Aorta (tissue), 5 donors: ENCODE measurements at regions of chr4 and their contacts with region 1.

Region 1: DNA sequence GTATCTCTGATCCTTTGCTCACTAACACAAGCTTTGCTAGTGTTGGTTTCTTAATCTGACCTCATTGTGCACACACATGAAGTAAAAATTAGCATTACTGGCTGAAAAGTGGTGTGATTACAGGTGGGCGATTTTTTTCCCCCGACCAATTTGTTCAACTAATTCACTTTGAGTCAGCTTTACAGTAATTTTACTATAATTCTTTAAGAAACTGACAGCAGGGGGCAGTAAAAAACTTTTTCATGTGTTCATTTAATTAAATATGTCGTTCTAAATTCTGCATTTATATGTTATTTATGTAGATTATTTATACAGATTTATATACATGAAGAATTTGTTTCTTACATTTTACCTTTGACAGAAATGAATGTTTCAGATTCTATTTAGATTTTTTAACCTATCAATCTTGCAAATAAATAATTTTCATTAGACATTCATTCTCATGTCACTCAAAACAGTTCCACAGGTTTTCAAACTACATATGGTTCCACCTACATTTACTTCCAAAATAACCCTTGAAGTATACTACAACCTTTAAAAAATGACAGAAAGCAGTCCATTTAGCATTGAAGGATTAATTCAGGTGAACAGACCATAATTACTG is 17.5 kb downstream of the PALLD start:
- DNase-seq: no peak
- ATAC-seq: no peak
- H3K4me3 ChIP-seq: no peak overlapping the region
- H3K27ac ChIP-seq: no peak overlapping the region
- H3K4me1 ChIP-seq: no peaks in the 10 kb centered on the region
- H3K27me3 ChIP-seq: no peaks in the 10 kb centered on the region

Region 2: GRCh38 chr4:168923526-168924194 is 409.3 kb after region 1 on chr4:
- intact Hi-C with region 1: loop called in 1 of 2 experiments (anchors 10 kb)
- DNase-seq: peak in 1 of 2 donors; percentile 45
- ATAC-seq: peak; percentile 70
- H3K4me3 ChIP-seq: no peak overlapping the region
- H3K27ac ChIP-seq: no peak overlapping the region
- H3K4me1 ChIP-seq: no peaks in the 10 kb centered on the region
- H3K27me3 ChIP-seq: no peaks in the 10 kb centered on the region

Region 3: DNA sequence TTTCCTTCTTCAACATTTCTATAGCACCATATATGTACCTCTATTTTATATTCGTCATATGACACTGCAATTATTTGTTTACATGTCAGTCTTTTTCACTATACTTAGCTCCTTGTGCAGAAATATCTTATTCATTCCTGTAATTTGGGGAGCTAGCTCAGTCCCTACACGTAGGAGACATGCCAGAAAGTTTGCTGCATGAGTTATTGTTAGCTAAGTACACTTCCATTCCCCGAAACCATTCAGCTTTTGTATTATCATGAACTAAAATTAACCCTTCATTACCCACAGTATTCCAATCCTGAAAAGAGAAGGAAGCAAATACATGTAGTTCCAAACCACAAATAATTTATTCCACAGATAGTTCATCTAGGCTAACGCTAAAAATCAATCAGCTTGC is 485.5 kb after region 1 on chr4:
- intact Hi-C with region 1: loop called in 1 of 2 experiments (anchors 5 kb)
- DNase-seq: no peak
- ATAC-seq: no peak
- H3K4me3 ChIP-seq: no peak overlapping the region
- H3K27ac ChIP-seq: no peak overlapping the region
- H3K4me1 ChIP-seq: no peaks in the 10 kb centered on the region
- H3K27me3 ChIP-seq: no peaks in the 10 kb centered on the region